ENCODE measurements at regions of chr22 and their contacts with region 1.

Region 1: GRCh38 chr22:36528795-36529751 is at the start of gene EIF3D:
- DNase-seq: peak; percentile 99
- H3K4me3 Mint-ChIP-seq: peak within 1 kb of the TSS; percentile 93
- H3K27ac Mint-ChIP-seq: peak within 1 kb of the TSS; percentile 99
- H3K4me1 Mint-ChIP-seq: peaks cover 30% of the 10 kb centered on the region
- H3K27me3 Mint-ChIP-seq: peaks cover 3% of the 10 kb centered on the region
- total RNA-seq, gene EIF3D: 189 to 196 TPM

Region 2: GRCh38 chr22:36397131-36398093 is 131.7 kb before region 1 on chr22:
- CTCF ChIA-PET with region 1: no interaction called
- POLR2A ChIA-PET with region 1: no interaction called
- DNase-seq: no peak
- H3K4me3 Mint-ChIP-seq: no peak overlapping the region
- H3K27ac Mint-ChIP-seq: no peak overlapping the region
- H3K4me1 Mint-ChIP-seq: peaks cover 40% of the 10 kb centered on the region
- H3K27me3 Mint-ChIP-seq: no peaks in the 10 kb centered on the region

Region 3: DNA sequence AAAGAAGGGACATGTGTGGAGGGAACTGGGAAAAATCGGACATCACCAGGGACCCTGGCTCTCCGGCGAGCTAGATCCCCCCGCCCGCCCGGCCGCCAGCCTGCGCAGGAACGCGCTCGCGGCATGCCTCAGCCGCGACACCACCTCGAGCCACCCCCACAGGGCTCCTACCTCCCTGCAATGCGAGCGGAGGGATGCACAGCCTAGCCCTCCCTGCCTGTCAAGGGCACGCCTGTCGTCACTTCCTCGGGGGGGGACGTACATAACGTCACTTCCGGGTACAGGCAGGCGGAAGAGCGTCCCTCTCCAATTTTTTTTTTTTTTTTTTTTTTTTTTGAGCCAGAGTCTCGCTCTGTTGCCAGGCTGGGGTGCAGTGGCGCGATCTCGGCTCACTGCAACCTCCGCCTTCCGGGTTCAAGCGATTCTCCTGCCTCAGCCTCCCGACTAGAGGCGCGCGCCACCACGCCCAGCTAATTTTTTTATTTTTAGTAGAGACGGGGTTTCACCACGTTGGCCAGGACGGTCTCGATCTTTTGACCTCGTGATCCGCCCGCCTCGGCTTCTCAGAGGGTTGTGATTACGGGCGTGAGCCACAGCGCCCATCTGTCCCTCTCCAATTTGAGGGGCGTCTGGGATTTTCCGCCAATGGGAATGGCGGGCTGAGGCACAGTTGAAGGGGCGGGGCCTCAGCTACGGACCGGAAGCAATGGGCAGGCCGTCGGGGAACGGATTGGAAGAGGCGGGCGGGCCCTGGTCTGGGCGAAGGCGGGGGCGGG is 47.5 kb before region 1 on chr22 and contains the start of gene TXN2:
- CTCF ChIA-PET with region 1: interaction called, 4 read pairs
- POLR2A ChIA-PET with region 1: interaction called, 10 read pairs
- DNase-seq: peak; percentile 96
- H3K4me3 Mint-ChIP-seq: peak within 1 kb of the TSS; percentile 100
- H3K27ac Mint-ChIP-seq: peak within 1 kb of the TSS; percentile 96
- H3K4me1 Mint-ChIP-seq: peaks cover 20% of the 10 kb centered on the region
- H3K27me3 Mint-ChIP-seq: no peaks in the 10 kb centered on the region
- total RNA-seq, gene TXN2: 72.3 to 73.2 TPM

Region 4: DNA sequence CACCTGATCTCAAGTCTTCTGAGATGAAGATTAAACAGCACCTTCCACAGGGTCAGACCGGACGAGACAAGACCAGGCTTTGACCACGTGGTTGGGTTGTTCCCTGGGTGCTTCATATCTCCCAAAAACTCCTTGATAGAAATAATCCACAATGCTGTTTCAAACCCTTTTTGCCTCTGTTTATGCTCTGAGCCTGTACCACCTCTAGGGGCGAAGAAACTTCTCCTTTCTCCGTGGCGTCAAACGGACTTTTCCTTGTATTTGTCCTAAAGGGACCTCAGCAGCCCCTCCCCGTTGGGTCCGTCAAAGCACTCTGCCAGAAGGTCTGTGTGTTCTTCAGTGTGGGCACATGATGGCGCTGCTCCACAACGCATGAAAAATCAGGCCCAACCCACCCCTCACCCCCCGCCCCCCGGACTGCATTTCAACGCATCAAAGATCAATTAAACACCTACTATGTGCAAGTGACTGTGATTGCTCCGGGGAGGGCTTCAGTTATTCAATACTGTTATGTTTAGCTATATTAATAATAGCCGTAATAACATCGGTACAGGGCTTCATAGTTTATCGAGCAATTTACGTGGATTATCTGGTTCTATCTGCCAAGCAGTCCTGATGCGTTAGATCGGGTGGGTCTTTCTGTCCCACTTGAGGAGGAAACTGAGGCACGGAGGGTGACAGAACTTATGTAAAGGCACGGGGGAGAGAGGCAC is 17.2 kb after region 1 on chr22:
- CTCF ChIA-PET with region 1: interaction called, 7 read pairs
- POLR2A ChIA-PET with region 1: interaction called, 42 read pairs
- DNase-seq: peak; percentile 41
- H3K4me3 Mint-ChIP-seq: no peak overlapping the region
- H3K27ac Mint-ChIP-seq: no peak overlapping the region
- H3K4me1 Mint-ChIP-seq: peaks cover 65% of the 10 kb centered on the region
- H3K27me3 Mint-ChIP-seq: peaks cover 14% of the 10 kb centered on the region

Region 5: DNA sequence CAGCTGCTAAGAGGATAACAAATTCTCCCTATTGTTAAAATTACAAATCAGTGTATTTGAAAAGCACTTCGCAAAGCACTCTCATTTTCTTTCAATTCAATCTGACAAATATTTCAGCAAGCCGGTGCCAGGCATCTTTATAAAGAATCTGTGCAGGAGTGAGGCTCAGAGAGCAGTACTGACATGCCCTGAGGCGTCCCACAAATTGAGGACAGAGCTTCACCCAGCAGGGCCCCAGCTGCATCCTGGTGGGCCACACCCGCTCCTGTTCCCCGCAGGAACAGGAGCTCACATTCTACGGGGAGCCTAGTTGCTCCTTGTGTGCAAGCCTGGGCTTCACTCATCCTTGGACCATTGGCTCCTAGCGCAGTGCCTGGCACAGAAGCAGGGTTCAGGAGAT is 60.8 kb after region 1 on chr22:
- CTCF ChIA-PET with region 1: no interaction called
- POLR2A ChIA-PET with region 1: no interaction called
- DNase-seq: no peak
- H3K4me3 Mint-ChIP-seq: no peak overlapping the region
- H3K27ac Mint-ChIP-seq: no peak overlapping the region
- H3K4me1 Mint-ChIP-seq: no peaks in the 10 kb centered on the region
- H3K27me3 Mint-ChIP-seq: peaks cover 28% of the 10 kb centered on the region